Caco-2 (cell line): ENCODE measurements at regions of chr17 and their contacts with region 1.

Region 1: DNA sequence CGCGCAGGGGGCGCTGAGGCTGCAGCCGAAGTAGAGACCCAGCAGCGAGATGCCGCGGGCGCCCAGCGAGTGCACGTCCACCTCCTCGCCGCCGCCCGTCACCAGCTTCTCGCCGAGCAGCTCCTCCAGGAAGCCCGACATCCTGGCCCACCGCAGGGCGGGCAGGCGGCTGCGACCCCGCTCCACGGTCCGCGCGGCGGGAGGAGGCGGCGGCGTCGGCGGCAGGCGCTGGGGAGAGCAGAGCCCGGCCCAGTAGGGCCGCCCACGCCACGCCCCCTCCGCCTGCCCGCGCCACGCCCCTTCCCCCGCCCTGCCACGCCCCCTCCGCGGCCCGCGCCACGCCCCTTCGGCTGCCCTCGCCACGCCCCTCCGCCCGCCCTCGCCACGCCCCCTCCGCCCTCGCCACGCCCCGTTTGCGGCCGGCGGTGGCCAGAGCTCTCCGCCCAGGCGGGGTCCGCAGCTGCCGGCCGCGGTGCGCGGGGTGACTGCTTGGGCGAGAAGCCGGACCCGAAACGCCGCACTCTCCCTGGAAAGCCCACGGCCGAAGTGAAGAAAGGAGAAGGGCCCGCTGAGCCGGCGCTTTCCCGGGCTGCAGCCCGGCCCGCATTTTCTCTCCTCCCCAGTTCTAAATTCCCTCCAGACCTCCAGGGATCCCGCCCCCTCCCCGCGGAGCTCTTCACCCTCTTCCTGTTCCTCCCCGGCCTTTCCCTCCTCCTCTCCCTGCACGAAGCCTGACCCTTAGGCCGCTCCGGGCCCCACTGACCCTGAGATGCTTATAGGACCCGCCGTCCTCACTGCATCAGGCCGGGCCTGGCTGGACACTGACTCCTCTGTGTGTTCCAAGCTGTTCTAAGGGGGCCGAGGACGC is at the start of gene NXN:
- DNase-seq: peak; percentile 82 to 93
- H3K4me3 ChIP-seq: peak within 1 kb of the TSS; percentile 98
- H3K4me3 Mint-ChIP-seq: peak within 1 kb of the TSS; percentile 99
- H3K27ac Mint-ChIP-seq: peak within 1 kb of the TSS; percentile 91
- H3K4me1 ChIP-seq: peaks cover 23% of the 10 kb centered on the region
- H3K4me1 Mint-ChIP-seq: peaks cover 20% of the 10 kb centered on the region
- H3K27me3 ChIP-seq: no peaks in the 10 kb centered on the region
- H3K27me3 Mint-ChIP-seq: no peaks in the 10 kb centered on the region
- CTCF ChIP-seq: peak in 1 of 2 experiments; percentile 29
- total RNA-seq, gene NXN: 68.4 and 76.7 TPM in 2 replicates

Region 2: GRCh38 chr17:409848-410545 is 569.8 kb before region 1 on chr17:
- CTCF ChIA-PET with region 1: interaction called, 54 read pairs
- POLR2A ChIA-PET with region 1: interaction called, 8 read pairs
- intact Hi-C with region 1: loop called (anchors 1 kb)
- DNase-seq: peak; percentile 99
- H3K4me3 ChIP-seq: peak overlapping the region; percentile 72
- H3K4me3 Mint-ChIP-seq: peak overlapping the region; percentile 74
- H3K27ac Mint-ChIP-seq: peak overlapping the region; percentile 83
- H3K4me1 ChIP-seq: peaks cover 6% of the 10 kb centered on the region; the same call in 1 of the 2 replicates
- H3K4me1 Mint-ChIP-seq: peaks cover 10% of the 10 kb centered on the region
- H3K27me3 ChIP-seq: no peaks in the 10 kb centered on the region
- H3K27me3 Mint-ChIP-seq: no peaks in the 10 kb centered on the region
- CTCF ChIP-seq: no peak

Region 3: DNA sequence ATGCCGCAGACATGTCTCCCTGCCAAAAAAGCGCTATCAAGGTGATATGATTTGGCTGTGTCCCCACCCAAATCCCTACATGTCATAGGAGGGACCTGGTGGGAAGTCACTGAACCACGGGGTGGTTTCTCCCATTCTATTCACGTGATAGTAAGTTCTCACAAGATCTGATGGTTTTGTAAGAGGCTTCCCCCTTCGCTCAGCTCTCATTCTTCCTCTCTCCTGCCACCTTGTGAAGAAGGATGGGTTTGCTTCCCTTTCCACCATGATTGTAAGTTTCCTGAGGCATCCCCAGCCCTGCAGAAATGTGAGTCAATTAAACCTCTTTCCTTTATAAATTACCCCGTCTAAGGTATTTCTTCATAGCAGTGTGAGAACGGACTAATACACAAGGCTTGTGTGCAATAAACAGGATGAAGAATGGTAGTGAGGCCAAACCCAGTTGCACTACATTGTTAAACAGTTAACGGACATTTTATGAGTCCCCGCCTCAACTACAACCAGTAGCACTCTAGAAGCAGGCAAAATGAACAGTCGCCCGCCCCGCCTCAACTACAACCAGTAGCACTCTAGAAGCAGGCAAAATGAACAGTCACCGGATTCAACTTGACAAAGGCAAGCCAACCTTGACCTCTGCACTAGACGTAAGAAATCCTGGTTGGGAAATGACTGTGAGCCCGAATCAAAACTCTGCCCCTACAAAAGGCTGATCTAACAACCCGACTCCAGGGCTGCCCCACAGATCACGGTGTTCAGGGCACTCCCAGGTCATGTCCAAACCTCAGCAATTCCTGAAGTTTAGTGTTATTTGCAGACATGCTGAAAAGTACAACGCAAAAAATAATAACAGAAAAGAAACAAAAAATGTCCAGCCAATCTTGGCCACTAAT is 291.4 kb before region 1 on chr17:
- CTCF ChIA-PET with region 1: no interaction called
- POLR2A ChIA-PET with region 1: no interaction called
- intact Hi-C with region 1: no loop called
- DNase-seq: no peak
- H3K4me3 ChIP-seq: no peak overlapping the region
- H3K4me3 Mint-ChIP-seq: no peak overlapping the region
- H3K27ac Mint-ChIP-seq: no peak overlapping the region
- H3K4me1 ChIP-seq: no peaks in the 10 kb centered on the region
- H3K4me1 Mint-ChIP-seq: no peaks in the 10 kb centered on the region
- H3K27me3 ChIP-seq: no peaks in the 10 kb centered on the region
- H3K27me3 Mint-ChIP-seq: no peaks in the 10 kb centered on the region
- CTCF ChIP-seq: peak in 1 of 2 experiments; percentile 8

Region 4: DNA sequence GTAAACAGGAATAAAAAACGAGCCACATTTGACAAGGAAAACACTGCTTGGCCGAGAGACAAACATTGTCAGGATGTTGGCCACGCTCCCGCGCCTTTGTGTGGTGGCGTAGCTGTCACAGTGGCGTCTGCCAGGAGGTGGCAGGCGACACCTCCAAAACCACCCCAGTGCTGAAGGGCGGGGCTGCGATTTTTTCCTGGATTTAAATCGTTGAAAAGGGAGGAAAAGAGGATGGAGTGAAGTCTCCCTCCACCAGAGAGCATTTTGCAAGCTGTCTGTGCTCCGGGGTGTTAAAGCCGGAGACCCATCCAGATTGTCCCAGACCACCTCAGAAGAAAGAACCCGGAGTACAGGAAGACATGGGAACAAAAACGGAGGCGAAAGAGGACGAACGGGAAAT is 184.9 kb before region 1 on chr17:
- CTCF ChIA-PET with region 1: interaction called, 10 read pairs
- POLR2A ChIA-PET with region 1: interaction called, 5 read pairs
- intact Hi-C with region 1: loop called (anchors 2 kb)
- DNase-seq: peak in 1 of 2 experiments; percentile 31
- H3K4me3 ChIP-seq: no peak overlapping the region
- H3K4me3 Mint-ChIP-seq: no peak overlapping the region
- H3K27ac Mint-ChIP-seq: no peak overlapping the region
- H3K4me1 ChIP-seq: no peaks in the 10 kb centered on the region
- H3K4me1 Mint-ChIP-seq: no peaks in the 10 kb centered on the region
- H3K27me3 ChIP-seq: no peaks in the 10 kb centered on the region
- H3K27me3 Mint-ChIP-seq: no peaks in the 10 kb centered on the region
- CTCF ChIP-seq: peak; percentile 12 to 27

Region 5: DNA sequence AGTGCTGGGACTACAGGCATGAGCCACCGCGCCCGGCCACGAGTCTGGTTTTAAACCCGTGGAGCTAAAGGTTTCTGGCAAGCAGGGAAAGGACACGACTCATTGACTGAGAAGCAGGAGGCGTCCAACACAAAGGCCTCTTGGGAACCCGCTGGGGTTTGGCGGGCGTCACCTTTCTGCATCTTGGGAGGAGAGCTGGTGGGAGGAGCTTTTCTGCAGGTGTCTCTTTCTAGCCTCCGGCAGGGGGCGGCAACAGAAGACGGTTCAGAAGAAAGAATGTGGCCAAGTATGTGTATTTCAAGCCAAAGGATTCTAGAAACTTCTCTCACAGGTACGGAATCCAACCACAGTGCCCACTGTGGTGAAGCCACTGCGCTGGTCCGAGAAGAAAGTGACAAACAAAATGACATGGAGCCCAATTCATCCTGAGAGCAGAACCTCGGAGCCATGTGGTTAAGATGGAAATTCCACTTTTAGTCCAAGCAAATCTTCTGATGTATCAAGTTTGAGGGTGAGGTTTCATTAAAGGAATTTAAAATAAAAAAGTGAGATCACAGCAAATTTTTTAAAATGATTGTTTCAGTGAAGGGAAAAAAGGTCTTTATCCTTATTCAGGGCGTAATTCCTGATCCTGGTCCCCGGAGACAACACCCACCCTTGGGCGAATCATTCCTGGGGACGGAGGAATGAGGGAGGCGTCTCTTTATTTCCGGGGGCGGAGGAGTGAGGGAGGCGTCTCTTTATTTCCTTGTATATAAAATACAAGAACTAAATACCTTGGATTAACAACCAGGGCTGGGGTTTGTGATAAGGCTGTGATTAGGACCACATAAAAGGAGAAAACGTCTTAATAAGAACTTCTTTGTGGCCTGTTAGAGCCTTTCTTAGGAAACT is 100.0 kb before region 1 on chr17:
- CTCF ChIA-PET with region 1: interaction called, 9 read pairs
- POLR2A ChIA-PET with region 1: no interaction called
- intact Hi-C with region 1: loop called (anchors 5 kb)
- DNase-seq: peak; percentile 71 to 81
- H3K4me3 ChIP-seq: no peak overlapping the region
- H3K4me3 Mint-ChIP-seq: no peak overlapping the region
- H3K27ac Mint-ChIP-seq: peak overlapping the region; percentile 71
- H3K4me1 ChIP-seq: peaks cover 30% of the 10 kb centered on the region
- H3K4me1 Mint-ChIP-seq: peaks cover 33% of the 10 kb centered on the region
- H3K27me3 ChIP-seq: no peaks in the 10 kb centered on the region
- H3K27me3 Mint-ChIP-seq: no peaks in the 10 kb centered on the region
- CTCF ChIP-seq: peak; percentile 17 to 43

Region 6: DNA sequence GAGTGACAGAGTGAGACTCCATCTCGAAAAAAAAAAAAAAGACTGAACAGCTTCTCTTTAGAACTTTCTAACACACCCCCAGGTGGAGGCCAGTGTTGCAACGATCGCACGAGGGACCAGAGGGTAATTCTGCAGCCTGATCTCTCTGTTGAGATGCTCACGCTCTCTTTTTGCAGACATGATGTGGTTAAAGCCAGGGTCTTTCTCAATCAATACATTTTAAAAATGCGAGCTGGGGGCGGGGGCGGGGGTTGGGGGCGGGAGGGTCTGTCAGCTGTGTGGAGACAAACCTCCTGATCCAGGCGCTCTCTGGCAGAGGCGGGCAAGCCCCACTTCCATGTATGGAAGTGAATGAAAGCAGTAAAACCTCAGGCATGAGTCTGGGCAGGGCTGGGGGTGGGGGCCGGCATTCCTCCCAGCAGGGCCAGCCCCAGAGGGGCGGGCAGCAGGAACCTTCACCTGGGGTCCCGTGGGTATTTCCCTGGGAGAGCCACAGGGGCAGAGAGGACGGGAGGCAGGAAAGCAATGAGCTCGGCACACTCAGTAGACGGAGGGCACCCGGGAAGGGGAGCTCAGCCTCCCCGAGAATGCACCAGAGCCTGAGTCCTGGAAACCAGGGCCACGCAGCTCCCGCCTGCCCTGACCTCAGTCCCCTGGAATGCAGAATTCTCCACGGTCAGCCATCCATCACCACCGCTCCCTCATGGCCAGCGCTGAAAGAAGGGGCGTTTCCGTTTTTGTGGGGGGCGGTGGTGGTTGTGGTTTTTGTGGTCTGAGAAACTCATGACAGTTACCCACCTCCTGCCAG is 28.2 kb before region 1 on chr17:
- CTCF ChIA-PET with region 1: interaction called, 27 read pairs
- POLR2A ChIA-PET with region 1: interaction called, 26 read pairs
- intact Hi-C with region 1: loop called (anchors 1 kb)
- DNase-seq: peak; percentile 93 to 96
- H3K4me3 ChIP-seq: peak overlapping the region; percentile 24
- H3K4me3 Mint-ChIP-seq: peak overlapping the region; percentile 74
- H3K27ac Mint-ChIP-seq: peak overlapping the region; percentile 98
- H3K4me1 ChIP-seq: peaks cover 51% of the 10 kb centered on the region
- H3K4me1 Mint-ChIP-seq: peaks cover 31% of the 10 kb centered on the region
- H3K27me3 ChIP-seq: no peaks in the 10 kb centered on the region
- H3K27me3 Mint-ChIP-seq: no peaks in the 10 kb centered on the region
- CTCF ChIP-seq: no peak

Region 7: DNA sequence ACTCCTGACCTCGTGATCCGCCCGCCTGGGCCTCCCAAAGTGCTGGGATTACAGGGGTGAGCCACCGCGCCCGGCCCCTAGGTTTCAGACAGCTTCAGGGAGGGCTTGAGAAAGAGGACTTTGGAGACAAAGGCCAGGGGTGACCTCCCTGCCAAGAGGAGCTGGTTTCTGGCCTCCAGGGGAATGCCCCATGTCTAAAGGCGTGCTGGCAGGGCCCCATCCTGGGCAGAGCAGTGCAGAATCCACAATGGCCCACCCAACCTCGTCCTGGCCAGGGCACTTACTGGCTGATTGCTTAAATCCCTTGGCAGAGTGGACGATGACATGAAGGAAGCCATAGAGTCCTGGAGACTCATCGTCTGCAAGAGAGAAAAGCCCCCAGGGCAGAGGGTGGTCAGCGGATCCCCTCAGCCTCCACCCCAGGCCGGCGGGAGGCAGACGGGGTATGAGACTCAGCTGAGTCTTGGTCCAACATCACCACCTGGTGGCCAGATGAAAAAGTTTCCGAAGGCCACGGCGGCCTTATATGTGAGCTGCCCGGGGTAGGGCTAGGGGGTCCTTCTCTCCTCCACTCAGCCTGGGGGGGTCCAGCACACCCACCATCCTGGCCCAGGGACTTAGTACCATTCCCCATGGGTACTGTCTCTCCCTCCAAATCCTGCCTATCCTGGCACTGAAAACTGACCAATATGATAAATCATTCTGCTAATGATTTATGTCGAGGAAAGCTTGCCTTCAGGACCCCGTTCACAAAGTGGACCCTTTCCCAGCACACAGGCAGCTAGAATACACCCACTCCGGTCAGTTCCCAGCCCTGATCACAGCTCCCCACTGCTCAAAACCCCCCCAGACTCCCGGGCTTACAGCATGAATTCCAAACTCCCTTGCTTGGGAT is 76.2 kb after region 1 on chr17:
- CTCF ChIA-PET with region 1: interaction called, 12 read pairs
- POLR2A ChIA-PET with region 1: no interaction called
- intact Hi-C with region 1: no loop called
- DNase-seq: peak; percentile 61 to 69
- H3K4me3 ChIP-seq: no peak overlapping the region
- H3K4me3 Mint-ChIP-seq: no peak overlapping the region
- H3K27ac Mint-ChIP-seq: no peak overlapping the region
- H3K4me1 ChIP-seq: no peaks in the 10 kb centered on the region
- H3K4me1 Mint-ChIP-seq: no peaks in the 10 kb centered on the region
- H3K27me3 ChIP-seq: no peaks in the 10 kb centered on the region
- H3K27me3 Mint-ChIP-seq: no peaks in the 10 kb centered on the region
- CTCF ChIP-seq: peak; percentile 63 to 86

Region 8: GRCh38 chr17:1067282-1067956 is 87.6 kb after region 1 on chr17:
- CTCF ChIA-PET with region 1: no interaction called
- POLR2A ChIA-PET with region 1: no interaction called
- intact Hi-C with region 1: no loop called
- DNase-seq: no peak
- H3K4me3 ChIP-seq: no peak overlapping the region
- H3K4me3 Mint-ChIP-seq: no peak overlapping the region
- H3K27ac Mint-ChIP-seq: no peak overlapping the region
- H3K4me1 ChIP-seq: no peaks in the 10 kb centered on the region
- H3K4me1 Mint-ChIP-seq: no peaks in the 10 kb centered on the region
- H3K27me3 ChIP-seq: no peaks in the 10 kb centered on the region
- H3K27me3 Mint-ChIP-seq: no peaks in the 10 kb centered on the region
- CTCF ChIP-seq: no peak

Region 9: DNA sequence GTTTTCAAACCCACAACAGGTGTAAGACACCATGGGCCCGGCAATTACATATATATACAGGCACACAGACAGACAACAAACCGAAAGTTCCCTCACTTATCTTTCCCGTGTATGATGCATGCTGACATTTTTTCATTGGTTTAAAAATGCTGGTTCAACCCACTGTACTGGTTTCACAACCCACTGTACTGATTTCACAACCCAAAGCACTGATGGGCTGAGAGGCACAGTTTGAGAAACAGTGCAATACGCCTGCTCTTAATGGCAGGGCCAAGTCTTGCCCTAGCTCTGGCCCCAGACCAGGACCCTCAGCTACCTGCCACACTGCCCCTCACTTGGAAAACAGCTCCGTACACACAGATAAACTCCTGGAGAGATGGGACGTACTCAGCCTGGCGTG is 118.6 kb after region 1 on chr17:
- CTCF ChIA-PET with region 1: no interaction called
- POLR2A ChIA-PET with region 1: no interaction called
- intact Hi-C with region 1: no loop called
- DNase-seq: peak in 1 of 2 experiments; percentile 21
- H3K4me3 ChIP-seq: no peak overlapping the region
- H3K4me3 Mint-ChIP-seq: no peak overlapping the region
- H3K27ac Mint-ChIP-seq: no peak overlapping the region
- H3K4me1 ChIP-seq: no peaks in the 10 kb centered on the region; the same call in 1 of the 2 replicates
- H3K4me1 Mint-ChIP-seq: no peaks in the 10 kb centered on the region
- H3K27me3 ChIP-seq: no peaks in the 10 kb centered on the region
- H3K27me3 Mint-ChIP-seq: no peaks in the 10 kb centered on the region
- CTCF ChIP-seq: no peak